Common myeloid progenitor, CD34-positive (primary cell): ENCODE measurements at regions of chr11 and their contacts with region 1.

Region 1: DNA sequence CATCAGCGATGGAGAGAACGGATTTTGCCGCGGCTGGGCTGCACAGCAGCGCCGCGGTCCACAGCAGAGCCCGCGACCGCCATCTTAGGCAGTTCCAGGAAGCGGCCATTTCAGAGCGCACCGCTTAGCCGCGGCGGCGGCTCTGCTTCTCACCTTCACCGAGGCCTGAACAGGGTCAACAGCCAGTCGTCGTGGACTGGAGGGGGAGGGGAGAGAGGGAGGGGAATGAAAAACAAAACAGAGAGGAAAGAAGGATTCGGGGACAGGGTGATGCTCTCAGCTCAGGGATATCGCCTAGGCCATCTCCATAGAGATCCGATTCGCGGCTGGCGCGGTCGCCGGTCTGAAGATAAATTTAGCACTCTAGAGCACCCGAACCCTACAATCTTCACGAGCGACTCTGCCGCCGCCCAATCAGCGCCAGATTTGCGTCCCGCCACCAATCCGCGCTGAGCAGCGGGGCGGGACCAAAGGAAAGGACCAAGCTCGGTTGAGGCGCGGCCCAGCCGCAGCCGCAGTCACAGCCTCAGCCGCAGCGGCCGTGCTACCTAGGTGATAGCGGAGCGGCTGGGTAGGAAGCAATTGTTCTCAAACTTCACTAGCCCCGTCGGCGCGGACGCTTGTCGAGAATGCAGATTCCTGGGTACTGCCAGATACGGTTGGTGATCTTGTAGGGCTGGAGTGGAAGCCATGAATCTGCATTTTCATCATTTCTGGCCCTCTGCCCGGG is at the start of gene ZBED5:
- DNase-seq: peak; percentile 98 to 99 (median 99)
- H3K4me3 ChIP-seq: peak within 1 kb of the TSS; percentile 95 to 100 (median 99)
- H3K27ac ChIP-seq: peak within 1 kb of the TSS; percentile 89 to 96
- H3K4me1 ChIP-seq: peaks cover 11 to 26% (median 20%) of the 10 kb centered on the region in 4 experiments
- H3K27me3 ChIP-seq: no peaks in the 10 kb centered on the region

Region 2: GRCh38 chr11:10564696-10565318 is 293.1 kb before region 1 on chr11:
- CTCF ChIA-PET with region 1: no interaction called
- POLR2A ChIA-PET with region 1: no interaction called
- DNase-seq: peak in 2 of 3 donors; percentile 59
- H3K4me3 ChIP-seq: no peak overlapping the region
- H3K27ac ChIP-seq: no peak overlapping the region
- H3K4me1 ChIP-seq: peaks cover 0 to 6% (median 3%) of the 10 kb centered on the region in 4 experiments
- H3K27me3 ChIP-seq: no peaks in the 10 kb centered on the region

Region 3: DNA sequence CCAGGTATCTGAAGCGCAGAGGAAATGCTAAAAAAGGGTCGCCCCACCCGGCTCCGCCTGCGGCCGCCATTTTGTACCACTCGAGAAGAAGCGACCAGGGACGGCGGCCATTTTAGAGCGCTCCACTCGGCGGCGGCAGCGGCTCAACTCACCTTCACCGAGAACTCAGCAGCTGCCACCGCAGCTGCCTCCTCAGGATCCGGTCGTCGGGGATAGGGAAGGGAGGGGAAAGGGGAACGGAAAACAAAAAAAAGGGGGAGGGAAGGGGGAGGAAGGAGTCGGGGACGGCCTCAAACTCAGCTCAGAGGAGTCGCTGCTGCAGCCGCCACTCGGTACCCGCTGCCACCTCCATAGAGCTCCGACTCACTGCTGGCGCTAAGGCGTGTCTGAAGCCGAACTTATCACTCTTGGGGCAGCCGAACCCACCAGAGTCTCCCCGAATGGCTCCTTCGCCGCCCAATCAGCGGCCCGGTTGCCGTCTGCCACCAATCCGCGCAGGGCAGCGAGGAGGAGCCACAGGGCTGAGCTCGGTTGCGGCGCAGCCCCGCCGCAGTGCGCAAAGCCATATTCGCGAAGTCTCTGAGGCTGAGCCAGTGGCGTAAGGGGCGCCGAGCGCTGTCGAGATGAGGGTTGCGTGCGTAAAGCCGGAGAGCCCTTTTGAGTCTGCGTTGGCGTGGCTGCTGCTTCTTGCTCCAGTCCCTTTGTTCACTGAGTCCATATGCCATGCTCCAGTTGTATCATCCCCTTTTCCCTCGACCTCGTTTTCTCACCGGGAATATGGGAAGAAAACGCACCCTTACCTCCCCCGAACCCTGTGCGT is 49.1 kb before region 1 on chr11 and contains the start of gene EIF4G2:
- CTCF ChIA-PET with region 1: interaction called, 11 read pairs
- POLR2A ChIA-PET with region 1: interaction called, 47 read pairs
- DNase-seq: peak; percentile 98 to 100 (median 99)
- H3K4me3 ChIP-seq: peak within 1 kb of the TSS; percentile 84 to 100 (median 99)
- H3K27ac ChIP-seq: peak within 1 kb of the TSS; percentile 98 to 99
- H3K4me1 ChIP-seq: peaks cover 6 to 34% (median 20%) of the 10 kb centered on the region in 4 experiments
- H3K27me3 ChIP-seq: no peaks in the 10 kb centered on the region

Region 4: DNA sequence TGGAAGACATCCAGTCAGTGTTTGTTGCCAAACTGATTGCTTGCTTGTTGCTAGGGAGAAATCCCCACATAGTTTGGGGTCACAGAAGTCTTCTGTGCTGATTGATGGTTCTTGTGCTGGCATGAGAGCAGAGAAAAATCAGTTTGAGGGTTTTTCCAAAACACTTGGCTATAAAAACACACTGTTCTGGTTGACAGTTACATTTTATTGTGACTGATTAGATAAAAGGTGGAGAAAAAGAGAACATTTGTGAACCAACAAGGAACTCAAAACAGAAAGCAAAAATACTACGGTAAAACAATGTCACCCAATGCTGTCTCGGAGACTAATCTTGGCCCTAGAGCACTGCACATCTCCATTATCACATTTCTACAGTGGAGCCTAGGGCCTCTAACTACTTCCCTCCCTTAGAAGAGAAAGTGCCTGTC is 34.7 kb before region 1 on chr11:
- CTCF ChIA-PET with region 1: no interaction called
- POLR2A ChIA-PET with region 1: no interaction called
- DNase-seq: peak in 2 of 3 donors; percentile 85 to 91
- H3K4me3 ChIP-seq: peak overlapping the region in 5 of 7 experiments; percentile 19 to 67 (median 48)
- H3K27ac ChIP-seq: peak overlapping the region; percentile 69 to 77
- H3K4me1 ChIP-seq: peaks cover 7 to 30% (median 12%) of the 10 kb centered on the region in 4 experiments
- H3K27me3 ChIP-seq: no peaks in the 10 kb centered on the region

Region 5: DNA sequence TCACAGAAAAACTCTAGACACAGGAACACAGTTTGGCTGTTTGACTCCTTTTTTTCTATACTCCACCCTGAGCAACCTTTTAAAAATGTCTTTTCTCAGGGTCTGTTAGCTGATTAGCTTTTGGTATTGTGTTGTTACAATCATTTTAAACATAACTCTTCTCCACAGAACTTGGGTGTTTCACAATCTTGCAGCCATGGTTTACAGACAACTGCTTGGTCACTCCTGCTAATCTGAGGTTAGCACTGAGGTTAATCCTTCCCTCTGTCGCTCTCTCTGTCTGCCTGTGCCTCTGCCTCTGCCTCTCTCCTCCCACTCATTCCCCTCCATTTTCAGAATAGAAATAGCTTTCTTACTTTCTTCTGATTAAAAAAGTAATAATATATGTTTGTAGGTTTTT is 62.3 kb after region 1 on chr11:
- CTCF ChIA-PET with region 1: no interaction called
- POLR2A ChIA-PET with region 1: no interaction called
- DNase-seq: peak; percentile 60 to 90 (median 85)
- H3K4me3 ChIP-seq: peak overlapping the region in 2 of 7 experiments; percentile 10 to 24
- H3K27ac ChIP-seq: no peak overlapping the region
- H3K4me1 ChIP-seq: peaks cover 4 to 18% (median 5%) of the 10 kb centered on the region in 4 experiments
- H3K27me3 ChIP-seq: no peaks in the 10 kb centered on the region